Cardiac septum (tissue), 1 donor: ENCODE measurements at regions of chr20 and their contacts with region 1.

Region 1: GRCh38 chr20:58870239-58871014 is 17.9 kb downstream of the GNAS start:
- DNase-seq: peak; percentile 87

Region 2: DNA sequence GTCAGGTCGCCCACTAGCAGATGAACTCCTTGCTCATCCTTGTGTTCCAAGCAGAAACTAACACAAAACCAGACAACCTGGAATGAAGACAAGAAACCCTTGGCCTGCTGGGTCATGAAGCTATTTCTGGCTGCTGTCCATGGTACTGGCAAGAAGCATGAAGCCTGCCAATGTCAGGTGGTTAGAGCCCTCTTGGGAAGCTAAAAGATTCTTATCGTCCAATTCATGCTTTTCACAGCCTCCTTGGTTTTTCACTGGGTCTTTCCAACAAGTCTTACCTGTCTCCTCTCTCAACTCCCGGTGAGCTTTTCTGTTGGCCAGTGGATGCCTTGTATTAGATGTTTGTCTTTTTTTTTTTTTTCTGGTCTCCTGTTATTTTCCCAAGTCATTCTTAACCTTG is 822.3 kb before region 1 on chr20:
- intact Hi-C with region 1: no loop called
- DNase-seq: no peak

Region 3: DNA sequence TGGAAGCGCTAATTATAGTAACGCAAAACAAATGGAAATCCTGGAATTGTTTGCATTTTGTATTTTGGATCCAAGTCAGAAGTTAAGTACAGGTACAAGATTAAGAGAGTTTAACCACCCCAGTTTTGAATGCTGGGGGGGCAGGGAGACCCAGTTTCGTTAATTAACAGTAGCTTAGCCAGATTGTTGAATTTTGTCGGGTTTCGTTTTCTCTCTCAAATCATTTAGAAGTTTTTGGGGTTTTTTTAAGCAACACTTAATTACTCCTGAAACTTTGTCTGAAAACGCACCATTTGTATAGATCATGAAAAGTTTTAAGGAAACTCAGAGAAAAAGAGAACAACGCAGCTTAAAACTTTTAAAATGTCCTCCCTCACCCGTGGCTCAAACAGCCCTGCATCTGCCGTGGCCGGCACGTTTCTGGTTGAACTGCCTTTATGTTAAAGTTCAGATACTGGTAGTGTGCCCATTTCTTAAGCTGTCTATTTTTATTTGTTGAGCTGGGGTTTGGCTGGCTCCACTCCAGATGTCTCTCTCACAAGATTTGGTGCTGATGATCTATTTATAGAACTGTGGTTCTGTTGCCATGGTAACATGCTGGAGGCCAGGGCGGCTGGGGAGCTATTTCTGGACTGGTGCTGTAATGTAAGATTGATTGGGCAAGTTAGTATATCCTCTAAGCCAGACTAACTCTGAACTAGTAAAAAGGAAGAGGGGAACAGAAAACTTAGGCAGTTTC is 37.1 kb after region 1 on chr20:
- intact Hi-C with region 1: no loop called
- DNase-seq: peak; percentile 92

Region 4: GRCh38 chr20:59087829-59088433 is 217.5 kb after region 1 on chr20:
- intact Hi-C with region 1: loop called (anchors 5 kb)
- DNase-seq: peak; percentile 90

Region 5: GRCh38 chr20:59207742-59208357 is 337.4 kb after region 1 on chr20:
- intact Hi-C with region 1: loop called (anchors 1 kb)
- DNase-seq: no peak

Region 6: GRCh38 chr20:59222253-59223181 is 352.1 kb after region 1 on chr20:
- intact Hi-C with region 1: loop called (anchors 2 kb)
- DNase-seq: peak; percentile 91

Region 7: DNA sequence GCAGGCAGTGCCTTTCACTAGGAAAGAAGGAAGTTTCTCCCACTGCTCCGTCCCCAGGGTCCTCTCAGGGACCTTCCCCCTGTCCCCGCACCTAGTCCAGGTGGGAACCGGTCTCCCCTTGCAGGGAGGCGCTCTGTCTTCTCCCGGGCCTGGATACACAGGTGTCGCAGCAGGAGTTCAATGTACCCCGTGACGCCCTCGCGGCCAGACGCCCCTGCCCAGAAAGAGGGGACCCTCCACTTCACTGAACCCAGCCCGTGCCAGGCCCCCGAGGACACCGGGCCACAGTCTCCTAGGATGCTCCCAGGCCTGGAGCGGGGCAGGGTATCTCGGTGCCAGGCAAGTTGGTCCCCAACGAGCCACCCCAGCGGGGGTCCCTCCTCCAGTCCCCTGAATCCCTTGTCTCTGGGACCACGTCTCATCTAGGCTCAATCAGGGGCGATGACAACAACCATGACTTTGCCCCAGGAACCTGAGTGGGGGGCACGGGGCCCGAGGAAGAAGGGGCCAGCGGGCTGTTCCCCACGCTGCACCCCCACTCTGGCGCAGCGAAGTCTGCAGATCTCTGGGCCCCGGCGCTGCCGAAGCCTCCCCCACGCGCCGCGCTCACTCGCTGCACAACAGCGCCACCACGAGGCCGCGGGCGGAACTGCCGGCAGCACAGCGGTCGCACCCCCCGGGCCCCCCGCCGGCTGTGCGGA is 533.0 kb after region 1 on chr20:
- intact Hi-C with region 1: loop called (anchors 5 kb)
- DNase-seq: peak; percentile 79

Region 8: DNA sequence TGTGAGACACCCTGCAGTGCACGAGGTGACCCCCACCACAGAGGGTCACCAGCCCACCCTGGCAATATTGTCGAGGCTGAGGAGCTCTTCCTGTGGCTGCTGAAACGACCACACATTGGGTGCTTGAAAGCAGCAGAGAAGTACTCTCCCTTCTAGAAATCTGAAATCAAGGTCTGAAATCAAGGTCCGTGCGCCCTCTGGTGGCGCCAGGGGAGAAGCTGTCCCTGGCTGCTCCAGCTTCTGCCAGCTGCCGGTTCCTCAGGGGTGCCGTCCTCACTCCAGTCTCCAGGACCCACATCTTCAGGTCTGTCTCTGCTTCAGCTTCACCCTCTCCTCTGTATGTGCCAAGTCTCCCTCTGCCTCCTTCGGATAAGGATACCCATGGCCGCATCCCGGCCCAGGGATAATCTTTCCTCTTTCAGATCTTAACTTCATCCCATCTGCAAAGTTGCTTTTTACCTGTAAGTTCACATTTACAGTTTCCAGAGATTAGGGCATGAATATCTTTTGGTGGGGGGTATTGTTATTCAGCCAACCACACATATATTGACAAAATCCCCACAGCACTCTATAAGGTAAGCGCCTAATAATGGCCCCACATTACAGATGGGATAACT is 625.6 kb after region 1 on chr20:
- intact Hi-C with region 1: loop called (anchors 5 kb)
- DNase-seq: peak; percentile 81